Posterior cingulate gyrus (tissue), 11 donors: ENCODE measurements at regions of chr12 and their contacts with region 1.

Region 1: GRCh38 chr12:93766796-93767523 is 89.8 kb downstream of the CRADD start:
- DNase-seq: peak in 3 of 10 donors; percentile 20 to 40 (median 30)

Region 2: GRCh38 chr12:93502802-93503623 is 263.9 kb before region 1 on chr12:
- intact Hi-C with region 1: loop called (anchors 5 kb)
- DNase-seq: peak in 5 of 10 donors; percentile 20 to 52 (median 40)

Region 3: DNA sequence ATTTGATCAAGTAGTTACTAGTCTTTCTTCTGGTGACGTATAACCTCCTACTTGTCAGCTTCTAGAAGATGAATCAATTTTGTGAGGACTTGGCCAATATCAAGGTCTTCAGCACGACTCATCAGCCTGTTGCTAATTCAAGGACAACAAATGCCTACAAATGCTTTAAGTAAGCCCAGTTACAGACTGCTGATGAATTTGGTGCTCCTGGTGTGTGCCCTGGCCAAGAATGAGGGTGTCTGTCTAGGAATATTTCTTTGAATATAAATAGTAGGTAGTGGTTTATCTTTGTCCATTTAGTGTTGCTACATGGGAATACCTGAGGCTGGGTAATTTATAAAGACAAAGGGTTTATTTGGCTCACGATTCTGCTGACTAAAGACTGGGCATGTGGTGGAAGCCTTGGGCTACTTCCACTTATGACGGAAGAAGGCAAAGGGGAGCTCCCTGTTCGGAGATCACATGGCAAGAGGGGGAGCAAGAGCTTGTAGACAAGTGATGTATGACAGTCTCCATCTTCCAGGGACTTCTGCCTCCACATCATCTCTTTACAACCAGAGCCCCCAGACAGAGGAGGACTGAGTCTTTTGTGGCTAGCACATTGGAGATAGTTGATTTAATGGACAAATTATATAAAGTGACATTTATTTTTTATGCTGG is 90.4 kb after region 1 on chr12:
- intact Hi-C with region 1: no loop called
- DNase-seq: no peak

Region 4: DNA sequence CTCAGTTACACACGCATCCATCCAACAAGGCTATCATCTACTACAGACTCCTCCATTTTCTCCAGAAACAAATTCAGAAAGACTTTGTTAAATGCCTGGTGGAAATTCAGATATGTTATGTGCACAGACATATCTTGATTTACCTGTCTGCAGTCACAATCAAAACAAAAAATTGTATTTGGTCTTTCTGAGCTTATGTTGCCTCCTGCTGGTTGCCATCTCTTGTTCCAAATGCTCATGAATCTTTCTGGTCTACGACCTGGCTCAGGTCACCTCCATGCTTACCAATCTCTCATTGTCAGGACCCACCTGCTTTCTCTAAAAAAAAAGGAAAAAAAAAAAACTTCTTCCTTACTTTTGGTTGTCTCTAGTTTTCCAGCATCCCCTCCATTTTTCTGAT is 212.2 kb after region 1 on chr12:
- intact Hi-C with region 1: loop called (anchors 2 kb)
- DNase-seq: no peak